ENCODE measurements at regions of chr3 and their contacts with region 1.

Region 1: DNA sequence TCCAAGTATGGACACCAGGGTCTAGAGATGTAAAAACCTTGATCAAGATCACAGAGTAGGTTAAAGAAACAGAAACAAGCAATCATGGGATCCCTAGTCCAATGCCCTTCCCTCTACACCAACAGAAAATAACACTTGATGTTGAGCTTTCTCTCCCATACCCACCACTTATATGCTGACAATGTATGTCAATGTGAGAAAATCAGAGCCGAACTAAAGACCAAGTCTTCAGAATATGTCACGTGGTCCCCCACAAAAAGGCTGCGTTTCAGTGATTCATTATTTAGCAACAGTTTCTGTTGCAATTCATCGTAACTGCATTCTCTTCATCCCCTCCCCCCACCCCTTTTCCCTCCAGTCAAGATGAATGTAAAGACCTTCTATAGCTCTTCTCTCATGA is 278.9 kb upstream of the STT3B start:
- DNase-seq: no peak
- H3K4me3 Mint-ChIP-seq: no peak overlapping the region
- H3K27ac Mint-ChIP-seq: peak overlapping the region; percentile 89
- H3K4me1 Mint-ChIP-seq: peaks cover 64% of the 10 kb centered on the region
- H3K27me3 Mint-ChIP-seq: peaks cover 3% of the 10 kb centered on the region

Region 2: GRCh38 chr3:31105438-31106077 is 148.2 kb before region 1 on chr3:
- intact Hi-C with region 1: loop called (anchors 1 kb)
- DNase-seq: peak; percentile 17
- H3K4me3 Mint-ChIP-seq: no peak overlapping the region
- H3K27ac Mint-ChIP-seq: peak overlapping the region; percentile 49
- H3K4me1 Mint-ChIP-seq: peaks cover 55% of the 10 kb centered on the region
- H3K27me3 Mint-ChIP-seq: no peaks in the 10 kb centered on the region

Region 3: GRCh38 chr3:31227131-31227562 is 26.6 kb before region 1 on chr3:
- intact Hi-C with region 1: loop called (anchors 1 kb)
- DNase-seq: no peak
- H3K4me3 Mint-ChIP-seq: peak overlapping the region; percentile 17
- H3K27ac Mint-ChIP-seq: peak overlapping the region; percentile 70
- H3K4me1 Mint-ChIP-seq: peaks cover 83% of the 10 kb centered on the region
- H3K27me3 Mint-ChIP-seq: no peaks in the 10 kb centered on the region

Region 4: GRCh38 chr3:31288641-31289100 is 34.9 kb after region 1 on chr3:
- intact Hi-C with region 1: loop called (anchors 1 kb)
- DNase-seq: peak; percentile 44
- H3K4me3 Mint-ChIP-seq: peak overlapping the region; percentile 46
- H3K27ac Mint-ChIP-seq: peak overlapping the region; percentile 87
- H3K4me1 Mint-ChIP-seq: peaks cover 49% of the 10 kb centered on the region
- H3K27me3 Mint-ChIP-seq: no peaks in the 10 kb centered on the region

Region 5: DNA sequence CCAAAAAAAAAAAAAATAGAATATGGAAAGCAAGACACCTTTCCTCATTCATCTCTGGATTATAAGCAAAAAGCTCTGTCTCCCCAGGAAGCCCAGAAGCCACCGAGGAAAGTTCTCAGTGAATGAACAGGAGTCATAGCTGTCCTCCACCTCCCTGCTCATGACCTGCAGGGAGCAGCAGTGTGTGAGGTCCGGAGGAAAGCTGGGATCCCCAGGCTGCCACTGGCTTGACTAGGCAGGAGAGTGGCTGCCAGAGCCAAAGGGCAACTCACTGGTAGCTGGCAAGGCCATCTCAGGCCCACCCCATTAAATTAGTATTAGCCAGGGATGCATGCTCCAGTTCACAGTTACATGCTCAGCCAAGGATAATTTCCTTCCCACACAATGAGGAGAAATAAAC is 87.3 kb after region 1 on chr3:
- intact Hi-C with region 1: no loop called
- DNase-seq: no peak
- H3K4me3 Mint-ChIP-seq: no peak overlapping the region
- H3K27ac Mint-ChIP-seq: no peak overlapping the region
- H3K4me1 Mint-ChIP-seq: no peaks in the 10 kb centered on the region
- H3K27me3 Mint-ChIP-seq: no peaks in the 10 kb centered on the region

Region 6: GRCh38 chr3:31448035-31448881 is 194.5 kb after region 1 on chr3:
- intact Hi-C with region 1: loop called (anchors 1 kb)
- DNase-seq: peak; percentile 4
- H3K4me3 Mint-ChIP-seq: no peak overlapping the region
- H3K27ac Mint-ChIP-seq: peak overlapping the region; percentile 13
- H3K4me1 Mint-ChIP-seq: peaks cover 30% of the 10 kb centered on the region
- H3K27me3 Mint-ChIP-seq: peaks cover 3% of the 10 kb centered on the region

Region 7: GRCh38 chr3:31777092-31777491 is 523.3 kb after region 1 on chr3:
- intact Hi-C with region 1: no loop called
- DNase-seq: no peak
- H3K4me3 Mint-ChIP-seq: no peak overlapping the region
- H3K27ac Mint-ChIP-seq: no peak overlapping the region
- H3K4me1 Mint-ChIP-seq: peaks cover 27% of the 10 kb centered on the region
- H3K27me3 Mint-ChIP-seq: peaks cover 4% of the 10 kb centered on the region

Measured in activated T-helper 1 cell treated with anti-CD3 and anti-CD28 coated beads, Interleukin-12 subunit alpha, Interleukin-12 subunit beta, Interleukin-2, Interleukin-4 antibody, amounts not matched to agents 30 ng/mL and 10 ng/mL and 1 ng/mL, durations not matched to agents 14 hours and 24 hours and 36 hours (primary cell).